ENCODE measurements at regions of chr3 and their contacts with region 1.

Region 1: DNA sequence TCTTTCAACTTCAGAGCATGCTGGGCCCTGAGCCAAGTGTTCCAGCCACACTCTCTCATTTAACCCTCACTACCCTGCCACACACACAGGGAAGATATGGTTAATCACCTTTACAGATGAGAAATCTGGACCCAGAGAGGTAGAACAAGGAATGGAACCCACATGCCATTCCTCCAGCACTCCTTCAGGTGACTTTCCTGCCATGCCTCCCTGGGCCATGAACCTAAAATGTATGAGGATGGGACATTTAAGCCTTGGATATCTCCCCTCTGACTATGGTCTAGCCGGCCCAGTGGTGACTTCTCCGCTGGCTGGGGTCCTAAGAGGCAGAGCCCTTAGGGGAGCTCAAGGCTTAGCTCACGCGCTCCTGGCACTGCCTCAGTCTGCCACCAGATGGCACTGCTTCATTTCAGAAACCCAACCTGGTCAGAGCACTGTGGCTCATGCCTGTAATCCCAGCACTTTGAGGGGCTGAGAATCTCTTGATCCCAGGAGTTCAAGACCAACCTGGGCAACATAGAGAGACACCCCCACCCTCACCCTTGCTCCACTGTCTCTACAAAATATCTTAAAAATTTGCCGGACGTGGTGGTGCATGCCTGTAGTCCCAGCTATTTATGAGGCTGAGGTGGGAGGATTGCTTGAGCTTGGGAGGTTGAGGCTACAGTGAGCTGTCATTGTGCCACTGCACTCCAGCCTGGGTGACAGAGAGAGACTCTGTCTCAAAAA is 2.2 kb upstream of the DCAF1 start:
- DNase-seq: peak; percentile 82
- H3K4me3 ChIP-seq: no peak overlapping the region
- H3K27ac ChIP-seq: no peak overlapping the region
- H3K4me1 ChIP-seq: peaks cover 0 to 20% (median 8%) of the 10 kb centered on the region in 4 donors
- H3K27me3 ChIP-seq: no peaks in the 10 kb centered on the region
- CTCF ChIP-seq: peak; percentile 92 to 96 (median 93)
- EP300 ChIP-seq: no peak
- POLR2A ChIP-seq: no peak

Region 2: DNA sequence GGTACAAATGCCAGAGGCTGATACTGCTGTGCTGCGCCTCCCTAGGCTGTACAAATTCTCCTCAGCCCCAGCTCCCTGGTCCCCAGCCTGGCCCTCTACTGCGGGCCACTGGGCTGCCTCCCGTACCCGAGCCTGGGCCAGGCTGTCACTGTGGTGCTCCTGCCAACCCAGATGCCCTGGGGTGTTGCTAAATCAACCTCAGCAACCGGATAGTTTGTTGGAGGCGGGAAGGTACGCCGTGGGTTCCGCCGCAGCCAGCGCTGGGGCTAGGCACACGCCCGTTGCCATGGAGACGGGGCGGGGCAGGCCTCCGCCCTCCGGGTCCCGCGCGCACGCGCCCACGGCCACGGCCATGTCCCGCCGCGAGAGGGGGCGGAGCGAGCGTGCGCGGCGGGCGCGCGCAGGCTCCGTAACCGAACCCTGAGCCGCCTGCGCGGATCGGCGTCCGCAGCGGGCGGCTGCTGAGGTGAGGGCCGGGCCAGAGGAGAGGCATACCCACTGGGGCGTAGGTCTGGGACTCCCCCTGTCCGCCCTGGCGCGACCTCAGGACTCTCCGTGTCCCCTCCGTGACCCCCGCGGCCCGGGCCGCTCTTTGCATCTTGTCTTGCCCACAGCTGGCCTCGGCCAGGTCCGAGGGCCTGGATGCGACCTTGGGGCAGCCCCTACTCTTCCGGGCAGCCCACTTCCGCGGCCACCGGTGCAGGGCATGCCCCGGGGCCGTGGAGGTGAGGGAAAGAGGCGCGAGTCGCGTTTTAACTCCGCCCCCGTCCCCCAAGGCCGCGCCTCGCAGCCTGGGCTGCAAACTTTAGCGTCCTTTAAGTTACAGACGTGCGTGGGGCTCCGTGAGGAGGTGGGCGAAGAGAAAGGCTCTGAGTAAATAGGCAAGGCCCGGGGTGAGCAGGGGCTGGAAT is 169.1 kb after region 1 on chr3 and contains the start of gene TEX264:
- in situ Hi-C with region 1: loop called in 2 of 4 experiments (anchors 5 to 10 kb)
- intact Hi-C with region 1: loop called (anchors 1 kb)
- DNase-seq: peak; percentile 94
- H3K4me3 ChIP-seq: peak within 1 kb of the TSS; percentile 76 to 98 (median 82)
- H3K27ac ChIP-seq: peak within 1 kb of the TSS; percentile 96 to 98 (median 97)
- H3K4me1 ChIP-seq: peaks cover 10 to 39% (median 34%) of the 10 kb centered on the region in 4 donors
- H3K27me3 ChIP-seq: no peaks in the 10 kb centered on the region
- CTCF ChIP-seq: no peak
- EP300 ChIP-seq: no peak
- POLR2A ChIP-seq: peak; percentile 79
- total RNA-seq, gene TEX264: 60.9 to 116 (median 88.2) TPM

Region 3: GRCh38 chr3:51682079-51682478 is 180.1 kb after region 1 on chr3:
- in situ Hi-C with region 1: loop called in 2 of 4 experiments (anchors 10 kb)
- intact Hi-C with region 1: no loop called
- DNase-seq: peak; percentile 74
- H3K4me3 ChIP-seq: no peak overlapping the region
- H3K27ac ChIP-seq: peak overlapping the region; percentile 28 to 58 (median 42)
- H3K4me1 ChIP-seq: peaks cover 13 to 33% (median 21%) of the 10 kb centered on the region in 4 donors
- H3K27me3 ChIP-seq: no peaks in the 10 kb centered on the region
- CTCF ChIP-seq: peak; percentile 70 to 93 (median 84)
- EP300 ChIP-seq: no peak
- POLR2A ChIP-seq: no peak

Region 4: GRCh38 chr3:51799879-51800749 is 298.1 kb after region 1 on chr3:
- in situ Hi-C with region 1: loop called in 2 of 4 experiments (anchors 25 kb)
- intact Hi-C with region 1: loop called (anchors 10 kb)
- DNase-seq: no peak
- H3K4me3 ChIP-seq: no peak overlapping the region
- H3K27ac ChIP-seq: no peak overlapping the region
- H3K4me1 ChIP-seq: no peaks in the 10 kb centered on the region
- H3K27me3 ChIP-seq: peaks cover 31% of the 10 kb centered on the region
- CTCF ChIP-seq: peak; percentile 54 to 74 (median 70)
- EP300 ChIP-seq: no peak
- POLR2A ChIP-seq: no peak

Measured in transverse colon (tissue), 4 donors.